ENCODE measurements at regions of chr9 and their contacts with region 1.

Region 1: GRCh38 chr9:38368726-38369125 is 23.8 kb upstream of the ALDH1B1 start:
- DNase-seq: no peak
- ATAC-seq: no peak

Region 2: GRCh38 chr9:38357350-38358114 is 11.2 kb before region 1 on chr9:
- intact Hi-C with region 1: loop called (anchors 1 kb)
- DNase-seq: peak; percentile 41
- ATAC-seq: no peak

Measured in Right ventricle myocardium inferior (tissue), 1 donor.